Psoas muscle (tissue), 8 donors: ENCODE measurements at regions of chr1 and their contacts with region 1.

Region 1: DNA sequence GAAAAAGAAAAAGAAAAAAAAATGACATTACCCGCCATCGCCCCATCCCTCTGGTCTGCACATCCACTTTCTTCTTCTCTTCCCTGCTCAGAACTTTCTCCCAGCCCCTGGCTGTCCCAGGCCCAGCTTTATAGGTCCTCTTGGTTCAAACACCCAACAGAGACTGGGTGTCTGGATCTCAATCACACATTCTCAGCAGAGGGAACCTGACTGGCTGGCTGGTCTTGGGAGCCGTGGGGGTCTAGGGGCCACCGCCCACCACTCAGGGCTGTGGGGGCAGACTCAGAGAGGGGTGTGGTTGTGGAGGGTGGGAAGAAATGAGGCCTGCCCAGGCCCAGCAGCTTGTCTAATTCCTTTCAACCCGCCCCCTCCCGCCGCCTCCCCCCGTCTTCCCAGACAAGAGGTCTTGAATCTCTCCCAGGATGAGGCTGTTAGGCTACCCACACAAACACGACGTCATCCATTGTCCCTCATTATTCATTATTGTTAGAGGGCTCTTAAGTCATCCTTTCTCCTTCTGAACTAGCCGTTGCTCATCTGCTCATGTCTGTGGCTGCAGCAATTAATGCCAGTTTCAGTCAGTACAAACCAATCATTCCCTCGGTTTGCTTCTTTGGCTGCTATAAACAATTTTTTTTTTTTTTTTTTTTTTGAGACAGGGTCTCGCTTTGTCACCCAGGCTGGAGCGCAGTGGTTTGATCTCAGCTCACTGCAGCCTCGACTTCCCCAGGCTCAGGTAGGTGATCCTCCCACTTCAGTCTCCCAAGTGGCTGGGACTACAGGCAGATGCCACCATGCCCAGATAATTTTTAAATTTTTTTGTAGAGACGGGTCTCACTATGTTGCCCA is 40.6 kb upstream of the CLIC4 start:
- DNase-seq: no peak
- ATAC-seq: no peak
- H3K4me3 ChIP-seq: no peak overlapping the region
- H3K27ac ChIP-seq: peak overlapping the region; percentile 43
- H3K4me1 ChIP-seq: no peaks in the 10 kb centered on the region
- H3K27me3 ChIP-seq: no peaks in the 10 kb centered on the region
- CTCF ChIP-seq: no peak

Region 2: DNA sequence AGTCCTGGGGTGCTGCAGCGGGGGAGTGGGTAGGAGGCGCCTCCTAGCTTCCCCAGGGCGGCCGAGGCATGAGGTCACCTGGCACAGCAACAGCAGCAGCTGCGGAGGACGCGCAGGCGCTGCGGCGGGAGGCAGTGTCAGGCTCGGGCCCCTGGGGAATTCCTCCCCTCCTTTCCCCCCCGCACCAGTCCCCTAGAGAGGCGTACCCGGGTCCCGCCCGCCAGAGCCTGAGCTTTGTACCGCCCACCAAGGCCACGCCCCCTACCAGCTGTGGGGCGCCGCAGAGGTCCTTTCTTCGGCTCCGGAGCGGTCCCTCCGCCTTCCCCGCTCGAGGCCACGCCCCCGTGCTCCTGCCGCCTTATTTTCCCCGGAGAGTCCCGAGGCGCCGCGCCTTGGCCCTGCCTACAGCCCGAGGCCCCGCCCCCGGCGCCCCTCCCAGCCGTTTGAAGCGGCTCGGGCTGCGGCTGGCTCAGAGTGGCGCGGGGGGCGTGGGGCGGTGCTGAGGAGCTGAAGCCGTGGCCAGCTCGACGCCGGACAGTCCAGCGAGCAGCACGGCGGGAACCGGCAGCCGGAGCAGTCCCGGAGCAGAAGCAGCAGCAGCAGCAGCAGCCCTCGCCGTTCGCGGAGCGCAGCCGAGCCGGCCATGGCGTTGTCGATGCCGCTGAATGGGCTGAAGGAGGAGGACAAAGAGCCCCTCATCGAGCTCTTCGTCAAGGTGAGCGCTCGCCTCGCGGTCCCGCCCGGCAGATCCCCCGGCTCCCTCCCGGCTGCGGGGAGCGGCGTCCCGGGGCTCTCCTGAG is 40.5 kb after region 1 on chr1 and contains the start of gene CLIC4:
- intact Hi-C with region 1: loop called in 1 of 2 experiments (anchors 5 kb)
- DNase-seq: peak; percentile 100
- ATAC-seq: peak; percentile 98 to 99 (median 99)
- H3K4me3 ChIP-seq: peak within 1 kb of the TSS; percentile 82
- H3K27ac ChIP-seq: peak within 1 kb of the TSS; percentile 79
- H3K4me1 ChIP-seq: no peaks in the 10 kb centered on the region
- H3K27me3 ChIP-seq: no peaks in the 10 kb centered on the region
- CTCF ChIP-seq: peak; percentile 21
- total RNA-seq, gene CLIC4: 23.9 to 62.4 (median 45.4) TPM

Region 3: DNA sequence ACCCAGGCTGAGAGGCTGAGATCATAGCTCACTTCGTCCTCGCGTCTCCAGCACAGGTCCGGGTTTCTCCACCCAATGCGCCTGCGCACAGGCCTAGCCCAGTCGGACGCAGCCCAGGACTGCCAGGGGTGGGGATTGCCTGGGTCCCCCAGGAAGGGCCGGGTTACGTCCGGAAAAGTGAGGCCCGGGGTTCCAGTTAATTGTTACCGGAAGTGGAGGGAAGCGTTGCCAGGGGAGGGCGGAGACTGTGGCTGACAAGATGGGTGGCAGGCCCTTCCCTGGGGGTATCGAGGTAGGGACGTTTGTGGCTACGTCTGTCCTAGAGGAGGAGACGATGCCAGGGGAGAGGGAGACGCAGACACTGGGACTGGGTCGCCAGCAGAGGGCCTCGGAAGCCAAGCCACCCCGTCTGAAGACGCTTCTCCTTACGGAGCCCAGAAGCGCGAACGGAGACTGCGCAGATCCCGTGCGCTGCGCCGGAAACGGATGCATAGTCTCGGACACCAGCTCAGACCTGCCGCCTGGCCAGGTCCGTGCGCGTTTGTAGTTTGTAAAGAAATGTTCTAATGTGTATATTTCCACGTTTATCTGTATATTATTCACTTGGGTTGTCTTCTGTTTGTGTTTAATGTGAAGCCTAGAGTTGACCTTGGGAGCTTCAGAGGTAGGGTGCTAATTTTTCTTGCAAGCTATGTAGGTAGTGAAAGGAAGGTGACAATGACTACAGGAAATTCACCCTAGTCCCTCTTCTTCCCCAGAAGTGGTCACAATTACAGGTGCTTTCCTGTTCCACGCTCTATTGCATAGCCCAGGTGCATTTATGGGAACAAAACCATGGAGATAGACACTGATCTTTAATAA is 535.3 kb after region 1 on chr1:
- intact Hi-C with region 1: no loop called
- DNase-seq: peak; percentile 93 to 97
- ATAC-seq: peak; percentile 92 to 93 (median 92)
- H3K4me3 ChIP-seq: peak overlapping the region; percentile 70
- H3K27ac ChIP-seq: peak overlapping the region; percentile 95
- H3K4me1 ChIP-seq: peaks cover 71% of the 10 kb centered on the region
- H3K27me3 ChIP-seq: no peaks in the 10 kb centered on the region
- CTCF ChIP-seq: peak; percentile 69